ENCODE measurements at regions of chr4 and their contacts with region 1.

Region 1: DNA sequence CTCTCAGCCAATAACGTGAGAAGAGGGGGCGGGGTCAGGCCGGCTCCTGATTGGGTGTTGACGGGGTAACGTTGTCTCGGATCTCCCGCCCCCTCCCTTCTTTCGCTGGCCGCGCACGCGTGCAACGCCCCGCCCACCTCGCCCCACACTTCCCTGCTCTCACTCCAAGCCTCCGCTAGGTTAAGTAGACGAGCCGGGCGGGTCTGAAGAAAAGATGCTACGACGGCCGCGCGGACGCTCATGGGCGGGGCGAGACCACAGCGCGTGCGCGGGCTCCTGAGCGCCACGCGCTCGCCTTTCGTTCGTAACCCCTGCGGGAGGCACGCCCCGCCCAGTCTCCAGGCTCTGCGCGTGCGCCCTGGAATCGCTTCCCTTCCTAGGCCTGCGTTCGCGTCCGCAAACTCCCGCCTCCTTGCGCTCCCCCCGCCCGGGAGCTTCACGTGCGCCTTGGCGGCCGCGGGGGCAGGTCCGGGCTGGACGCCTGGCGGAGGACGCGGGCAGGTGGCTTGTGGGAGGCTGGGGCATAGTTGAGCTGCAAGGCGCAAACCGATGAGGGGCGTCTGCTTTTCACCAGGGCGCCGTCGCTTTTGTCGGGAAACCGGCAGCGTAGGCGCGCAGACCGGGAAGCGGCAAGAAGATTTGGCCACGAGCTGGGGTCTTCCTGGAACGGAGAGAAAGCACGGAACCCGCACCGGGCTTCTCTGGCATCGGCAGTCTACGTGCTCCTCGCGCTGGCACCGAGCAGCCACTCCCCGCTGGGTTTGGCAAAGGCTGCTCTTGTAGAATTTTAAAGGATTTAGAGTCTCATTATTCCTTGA is 467 bp upstream of the PGRMC2 start:
- H3K4me3 Mint-ChIP-seq: peak overlapping the region; percentile 95
- H3K27ac Mint-ChIP-seq: peak overlapping the region; percentile 92
- H3K4me1 Mint-ChIP-seq: peaks cover 35% of the 10 kb centered on the region
- H3K27me3 Mint-ChIP-seq: peaks cover 2% of the 10 kb centered on the region

Region 2: DNA sequence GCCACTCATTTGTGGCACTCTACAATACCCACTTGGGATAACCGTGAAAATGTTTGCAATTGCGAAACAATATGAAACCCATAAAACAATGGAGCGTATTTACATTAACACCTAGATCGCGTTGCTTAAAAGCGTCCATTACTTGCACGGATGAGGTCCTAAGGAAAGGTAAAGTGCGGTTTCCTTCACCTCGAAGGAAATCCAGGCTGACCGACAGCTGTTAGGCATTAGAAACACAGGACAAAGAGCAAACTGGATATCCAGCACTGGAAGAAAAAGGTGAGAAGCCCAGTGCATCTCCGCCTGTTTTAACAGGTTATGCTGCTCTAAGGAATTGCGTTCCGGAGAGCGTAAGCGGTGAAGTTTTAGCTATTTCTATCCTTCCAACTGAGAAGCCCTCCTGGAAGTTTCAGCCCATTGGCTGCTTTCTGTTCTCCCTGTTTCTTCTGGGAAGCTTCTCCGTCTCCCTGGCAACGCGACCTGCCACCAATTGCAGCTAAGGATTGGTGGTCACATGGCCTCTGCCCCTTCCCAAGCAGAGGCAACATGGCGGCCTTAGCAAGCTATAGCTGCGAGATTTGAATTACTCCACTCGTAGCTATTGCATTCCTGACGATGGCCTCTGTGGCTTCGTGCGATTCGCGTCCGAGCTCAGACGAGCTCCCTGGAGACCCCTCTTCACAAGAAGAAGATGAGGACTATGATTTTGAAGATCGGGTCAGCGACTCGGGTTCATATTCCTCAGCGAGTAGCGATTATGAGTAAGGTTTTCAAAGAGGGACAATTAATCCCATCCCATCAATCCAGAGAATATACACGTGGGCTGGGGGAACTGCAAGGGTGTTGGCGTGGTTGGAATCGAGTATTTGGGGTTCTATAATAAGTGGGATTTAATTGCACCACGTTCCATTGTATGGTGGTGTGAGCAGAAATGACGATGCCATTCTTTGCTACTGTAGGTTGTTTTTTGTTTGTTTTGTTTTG is 655.4 kb before region 1 on chr4 and contains the start of gene INTU:
- intact Hi-C with region 1: loop called (anchors 5 kb)
- H3K4me3 Mint-ChIP-seq: peak within 1 kb of the TSS; percentile 93
- H3K27ac Mint-ChIP-seq: peak within 1 kb of the TSS; percentile 86
- H3K4me1 Mint-ChIP-seq: peaks cover 17% of the 10 kb centered on the region
- H3K27me3 Mint-ChIP-seq: peaks cover 2% of the 10 kb centered on the region

Region 3: GRCh38 chr4:127788517-127788916 is 499.6 kb before region 1 on chr4:
- intact Hi-C with region 1: no loop called
- H3K4me3 Mint-ChIP-seq: no peak overlapping the region
- H3K27ac Mint-ChIP-seq: no peak overlapping the region
- H3K4me1 Mint-ChIP-seq: no peaks in the 10 kb centered on the region
- H3K27me3 Mint-ChIP-seq: peaks cover 5% of the 10 kb centered on the region

Region 4: GRCh38 chr4:127880764-127881562 is 407.1 kb before region 1 on chr4 and contains the start of gene PLK4:
- intact Hi-C with region 1: loop called (anchors 5 kb)
- H3K4me3 Mint-ChIP-seq: peak within 1 kb of the TSS; percentile 95
- H3K27ac Mint-ChIP-seq: peak within 1 kb of the TSS; percentile 91
- H3K4me1 Mint-ChIP-seq: peaks cover 12% of the 10 kb centered on the region
- H3K27me3 Mint-ChIP-seq: no peaks in the 10 kb centered on the region

Region 5: DNA sequence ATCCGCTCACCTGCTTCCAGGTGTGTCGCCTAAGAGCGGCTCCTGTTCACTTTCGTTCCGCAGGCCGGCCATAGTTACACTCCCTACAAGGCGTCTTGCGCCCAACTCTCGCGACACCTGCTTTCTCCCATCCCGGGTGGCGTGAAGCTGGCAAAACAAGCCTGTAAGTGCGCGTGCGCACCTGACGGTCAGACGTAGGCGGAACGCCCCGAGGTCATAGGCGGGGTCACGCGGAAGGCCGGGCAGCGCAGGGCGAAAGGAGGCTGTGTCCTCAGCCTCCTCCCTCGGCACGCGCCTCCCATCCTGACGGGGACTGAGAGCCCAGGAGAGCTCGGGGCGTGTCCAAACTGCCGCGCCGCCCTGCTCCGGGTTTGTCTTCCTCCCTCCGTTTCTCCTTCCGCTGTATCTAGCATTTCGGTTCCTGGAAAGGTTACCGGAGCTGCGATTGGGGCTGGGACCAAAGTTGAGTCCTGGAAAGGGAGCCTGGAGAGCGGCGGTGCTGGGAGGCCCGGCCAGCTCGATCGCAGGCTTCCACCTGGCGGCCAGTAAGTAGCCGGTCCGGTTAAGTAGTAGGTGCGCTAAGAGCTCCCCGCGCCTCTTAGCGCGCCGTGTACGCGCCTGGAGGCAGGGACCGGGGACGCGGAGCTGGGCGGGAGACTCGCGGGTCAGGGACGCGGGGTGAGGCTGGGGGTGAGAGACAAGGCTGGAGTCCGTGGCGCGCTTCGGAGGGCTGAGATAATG is 322.8 kb before region 1 on chr4 and contains the starts of genes ABHD18 and MFSD8:
- intact Hi-C with region 1: loop called (anchors 2 kb)
- H3K4me3 Mint-ChIP-seq: peak within 1 kb of the TSS; percentile 96
- H3K27ac Mint-ChIP-seq: peak within 1 kb of the TSS; percentile 97
- H3K4me1 Mint-ChIP-seq: peaks cover 19% of the 10 kb centered on the region
- H3K27me3 Mint-ChIP-seq: no peaks in the 10 kb centered on the region

Region 6: GRCh38 chr4:128060699-128061565 is 227.1 kb before region 1 on chr4 and contains the start of gene LARP1B:
- intact Hi-C with region 1: loop called (anchors 1 kb)
- H3K4me3 Mint-ChIP-seq: peak within 1 kb of the TSS; percentile 78
- H3K27ac Mint-ChIP-seq: peak within 1 kb of the TSS; percentile 87
- H3K4me1 Mint-ChIP-seq: peaks cover 10% of the 10 kb centered on the region
- H3K27me3 Mint-ChIP-seq: peaks cover 2% of the 10 kb centered on the region

Region 7: DNA sequence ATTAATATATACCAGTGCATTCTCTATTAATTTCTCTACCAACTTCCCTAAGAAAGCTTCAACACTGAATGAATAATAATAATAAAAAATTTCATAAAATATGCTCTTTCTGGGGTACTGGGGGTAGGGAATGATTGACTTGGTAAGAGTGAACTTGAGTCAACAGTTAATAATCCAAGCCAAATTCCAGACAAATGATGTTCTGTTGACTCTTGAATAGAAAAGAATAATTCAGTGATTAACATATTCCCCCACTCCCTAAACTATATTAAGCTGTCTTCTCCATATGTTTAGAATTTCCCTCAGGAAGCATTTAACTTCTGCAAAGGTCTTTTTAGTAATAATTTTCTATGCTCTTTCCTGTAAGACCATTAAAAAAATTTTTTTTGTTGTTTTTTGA is 12.7 kb before region 1 on chr4:
- intact Hi-C with region 1: no loop called
- H3K4me3 Mint-ChIP-seq: no peak overlapping the region
- H3K27ac Mint-ChIP-seq: no peak overlapping the region
- H3K4me1 Mint-ChIP-seq: peaks cover 4% of the 10 kb centered on the region
- H3K27me3 Mint-ChIP-seq: no peaks in the 10 kb centered on the region

Region 8: DNA sequence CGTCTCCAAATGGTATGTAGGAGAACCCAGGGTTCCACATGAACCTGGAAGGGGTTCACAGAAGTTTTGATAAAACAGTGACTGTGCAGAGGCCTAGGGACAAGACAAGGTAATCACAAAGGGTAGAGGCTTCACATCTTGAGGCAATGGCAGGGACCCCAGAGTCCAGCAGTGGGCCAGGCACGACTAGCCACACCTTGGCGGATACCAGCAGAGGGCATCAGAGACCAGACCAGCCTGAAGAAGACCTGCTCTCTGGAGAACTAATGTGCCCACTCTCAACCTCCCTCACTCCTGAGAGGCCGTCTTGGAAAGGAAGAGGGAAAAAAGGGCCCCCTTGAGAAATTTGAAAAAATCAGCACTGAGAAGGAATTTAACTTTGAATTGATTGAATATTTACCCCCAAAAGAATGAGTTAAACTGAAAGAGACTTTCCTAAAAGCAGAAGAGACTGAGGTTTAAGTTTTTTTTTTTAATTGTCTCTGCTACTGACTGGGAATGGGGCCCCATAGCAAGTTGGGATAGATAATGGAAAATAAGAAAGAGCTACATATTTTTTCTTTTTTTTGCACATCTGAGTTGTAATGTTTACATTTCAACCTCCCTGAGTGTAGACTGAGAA is 277.6 kb after region 1 on chr4:
- intact Hi-C with region 1: loop called (anchors 10 kb)
- H3K4me3 Mint-ChIP-seq: no peak overlapping the region
- H3K27ac Mint-ChIP-seq: peak overlapping the region; percentile 55
- H3K4me1 Mint-ChIP-seq: peaks cover 73% of the 10 kb centered on the region
- H3K27me3 Mint-ChIP-seq: no peaks in the 10 kb centered on the region

Region 9: DNA sequence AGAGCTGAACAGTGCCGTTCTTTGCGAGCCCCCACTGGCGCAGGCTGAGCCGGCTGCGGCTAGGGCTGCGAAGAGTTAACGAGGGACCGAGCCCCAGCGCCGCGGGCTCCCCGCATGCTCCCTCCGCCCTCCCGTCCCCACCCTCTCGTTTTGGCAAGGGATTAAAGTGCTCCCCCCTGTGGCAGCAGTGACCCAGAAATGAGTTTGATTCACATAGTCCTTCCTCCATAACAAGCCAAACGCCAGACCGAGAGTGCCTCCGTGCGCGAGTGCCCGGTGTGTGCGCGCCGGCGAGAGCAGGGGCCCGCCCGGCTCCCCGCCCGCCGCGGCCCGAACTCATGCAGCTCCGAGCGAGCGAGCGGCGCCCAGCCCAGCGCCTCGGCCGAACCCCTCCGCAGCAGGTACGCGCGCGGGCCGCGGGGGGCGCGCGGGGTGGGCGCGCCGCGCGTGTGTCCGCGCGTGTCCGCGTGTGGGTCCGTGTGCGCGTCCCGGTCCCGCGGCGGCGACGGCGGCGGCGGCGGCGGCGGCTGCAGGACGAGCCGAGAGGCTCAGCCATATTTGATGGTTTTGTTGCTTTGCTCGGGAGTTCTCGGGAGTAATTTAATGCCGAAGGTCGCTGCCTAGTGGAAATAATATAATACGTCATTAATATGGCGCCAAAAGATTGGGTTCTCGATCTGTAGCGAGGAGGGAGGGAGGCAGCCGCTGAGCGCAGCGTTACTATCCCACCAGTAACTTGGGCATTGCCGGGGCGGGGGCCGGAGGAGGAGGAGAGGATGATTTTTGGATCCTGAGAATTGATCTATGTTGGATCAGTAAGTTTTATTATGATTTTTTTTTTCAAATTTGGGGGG is 521.6 kb after region 1 on chr4 and contains the start of gene JADE1:
- intact Hi-C with region 1: loop called (anchors 1 kb)
- H3K4me3 Mint-ChIP-seq: peak within 1 kb of the TSS; percentile 89
- H3K27ac Mint-ChIP-seq: peak within 1 kb of the TSS; percentile 92
- H3K4me1 Mint-ChIP-seq: peaks cover 9% of the 10 kb centered on the region
- H3K27me3 Mint-ChIP-seq: peaks cover 3% of the 10 kb centered on the region

Measured in dendritic cell treated with granulocyte-macrophage colony-stimulating factor and Interleukin-4, amounts not matched to agents 40 ng/mL and 50 ng/mL, for 4 days (primary cell).